MCF 10A (cell line): ENCODE measurements at regions of chr5 and their contacts with region 1.

Region 1: DNA sequence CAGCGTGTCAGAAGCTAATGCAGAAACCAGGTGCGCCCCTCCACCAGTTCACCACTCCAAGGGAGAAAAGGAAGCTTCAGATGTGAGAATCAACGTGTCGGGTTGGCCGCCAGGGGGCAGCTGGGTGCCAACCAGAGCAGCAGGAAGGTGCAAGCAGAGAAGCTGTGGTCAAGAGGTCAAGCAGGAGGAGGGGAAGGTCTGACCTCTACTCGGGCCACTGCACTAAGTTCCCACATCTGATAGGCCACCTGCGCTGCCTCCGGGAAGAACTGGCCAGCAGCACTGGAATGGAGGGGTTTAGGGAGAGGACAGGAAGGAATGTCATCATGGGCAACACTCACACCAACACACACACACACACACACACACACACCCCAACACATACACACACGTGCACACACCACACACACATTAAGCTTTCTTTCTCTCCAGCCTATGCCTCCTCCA is 31.4 kb downstream of the ANXA6 start:
- DNase-seq: peak; percentile 76
- H3K4me3 Mint-ChIP-seq: no peak overlapping the region
- H3K27ac Mint-ChIP-seq: no peak overlapping the region
- H3K4me1 Mint-ChIP-seq: peaks cover 12% of the 10 kb centered on the region
- H3K27me3 Mint-ChIP-seq: peaks cover 21% of the 10 kb centered on the region
- CTCF ChIP-seq: peak; percentile 91

Region 2: DNA sequence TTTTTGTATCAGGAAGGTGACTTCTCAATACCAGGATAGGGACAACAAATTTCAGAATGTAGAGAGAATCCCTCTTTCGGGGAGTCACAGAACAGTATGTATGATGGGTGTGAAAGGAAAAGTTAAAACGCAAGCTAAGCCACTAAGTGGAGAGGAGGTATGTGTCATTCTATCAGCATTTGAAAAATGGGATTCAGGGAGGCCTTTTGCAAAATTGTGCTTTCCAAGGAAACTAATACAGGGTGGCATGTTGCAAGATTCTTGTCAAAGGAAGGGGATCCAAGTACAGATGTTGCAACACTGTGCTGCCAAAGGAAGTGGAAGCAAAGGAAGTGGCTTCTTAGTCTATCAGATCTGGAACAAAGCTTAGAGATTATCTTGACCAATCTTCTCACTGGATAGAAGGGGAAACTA is 32.7 kb before region 1 on chr5:
- CTCF ChIA-PET with region 1: interaction called, 13 read pairs
- POLR2A ChIA-PET with region 1: no interaction called
- intact Hi-C with region 1: no loop called
- DNase-seq: peak; percentile 98
- H3K4me3 Mint-ChIP-seq: peak overlapping the region; percentile 28
- H3K27ac Mint-ChIP-seq: peak overlapping the region; percentile 76
- H3K4me1 Mint-ChIP-seq: peaks cover 43% of the 10 kb centered on the region
- H3K27me3 Mint-ChIP-seq: no peaks in the 10 kb centered on the region
- CTCF ChIP-seq: no peak

Region 3: GRCh38 chr5:151150471-151151262 is 24.4 kb after region 1 on chr5:
- CTCF ChIA-PET with region 1: interaction called, 206 read pairs
- POLR2A ChIA-PET with region 1: interaction called, 3 read pairs
- intact Hi-C with region 1: no loop called
- DNase-seq: no peak
- H3K4me3 Mint-ChIP-seq: no peak overlapping the region
- H3K27ac Mint-ChIP-seq: no peak overlapping the region
- H3K4me1 Mint-ChIP-seq: peaks cover 4% of the 10 kb centered on the region
- H3K27me3 Mint-ChIP-seq: no peaks in the 10 kb centered on the region
- CTCF ChIP-seq: no peak

Region 4: DNA sequence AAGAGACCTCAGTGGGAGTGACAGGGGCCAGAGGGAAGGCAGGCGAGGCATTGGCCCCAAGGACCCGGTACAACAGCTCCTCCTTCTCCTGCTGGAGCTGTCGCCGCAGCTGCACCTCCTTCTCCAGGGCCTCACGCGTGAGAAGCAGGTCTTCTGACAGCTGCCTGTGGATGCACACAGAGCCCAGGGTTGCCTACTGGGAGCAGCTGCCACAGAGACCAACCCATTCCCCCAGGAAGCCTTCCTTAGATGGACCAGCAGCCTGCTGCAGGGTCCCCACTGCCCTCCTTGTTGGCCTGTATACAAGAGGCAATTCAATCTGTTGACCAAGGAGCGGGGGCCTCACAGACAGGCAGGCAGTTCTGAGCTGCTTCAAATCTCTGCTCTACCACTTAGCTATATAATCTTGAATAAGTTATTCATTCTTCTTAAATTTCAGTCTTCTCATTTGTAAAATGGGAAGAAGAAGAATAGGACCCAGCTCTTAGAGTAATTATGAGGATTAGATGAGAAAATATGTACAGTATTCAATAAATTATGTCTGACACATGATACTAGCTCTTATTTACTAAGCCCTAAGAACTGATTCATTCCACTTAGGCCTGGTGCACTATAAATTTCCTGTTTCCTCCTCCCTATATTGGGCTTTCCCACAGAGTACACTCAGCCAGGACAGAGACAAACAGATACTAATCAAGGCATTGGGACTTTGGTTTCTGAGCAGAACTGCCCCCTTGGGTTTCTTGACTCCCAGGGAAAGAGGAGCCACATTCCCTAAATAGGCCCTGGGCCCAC is 57.4 kb after region 1 on chr5:
- CTCF ChIA-PET with region 1: interaction called, 11 read pairs
- POLR2A ChIA-PET with region 1: no interaction called
- intact Hi-C with region 1: no loop called
- DNase-seq: no peak
- H3K4me3 Mint-ChIP-seq: no peak overlapping the region
- H3K27ac Mint-ChIP-seq: no peak overlapping the region
- H3K4me1 Mint-ChIP-seq: no peaks in the 10 kb centered on the region
- H3K27me3 Mint-ChIP-seq: no peaks in the 10 kb centered on the region
- CTCF ChIP-seq: no peak

Region 5: DNA sequence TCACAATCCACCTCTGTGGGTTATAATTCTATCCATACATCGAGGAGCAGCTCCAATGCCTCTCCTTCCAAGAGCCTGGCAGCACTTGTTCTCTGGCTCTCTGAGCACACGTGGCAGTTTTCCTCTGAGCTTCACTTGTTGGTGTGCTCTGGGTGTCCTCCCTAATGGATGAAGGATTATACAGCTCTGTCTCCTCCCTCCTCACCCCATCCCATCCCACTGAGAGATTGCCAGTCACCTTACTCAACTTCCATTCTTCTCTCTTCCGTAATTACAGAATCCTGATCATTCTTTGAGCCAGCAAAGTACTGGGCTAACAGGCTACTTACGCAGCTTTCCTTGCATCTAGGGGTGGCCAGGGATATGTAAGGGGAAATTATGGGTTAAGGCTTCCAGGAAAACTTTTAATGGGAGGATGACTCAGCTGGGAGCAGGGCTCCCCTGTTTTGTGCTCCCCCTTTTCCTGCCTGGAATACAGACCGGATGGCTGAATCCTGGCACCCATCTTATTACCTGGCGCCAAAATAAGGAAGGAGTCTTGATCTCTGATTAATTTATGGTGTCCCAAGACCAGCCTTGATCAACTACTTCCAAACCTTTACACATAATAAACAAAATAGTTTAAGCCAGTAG is 103.9 kb after region 1 on chr5:
- CTCF ChIA-PET with region 1: interaction called, 338 read pairs
- POLR2A ChIA-PET with region 1: no interaction called
- intact Hi-C with region 1: no loop called
- DNase-seq: no peak
- H3K4me3 Mint-ChIP-seq: no peak overlapping the region
- H3K27ac Mint-ChIP-seq: no peak overlapping the region
- H3K4me1 Mint-ChIP-seq: peaks cover 9% of the 10 kb centered on the region
- H3K27me3 Mint-ChIP-seq: no peaks in the 10 kb centered on the region
- CTCF ChIP-seq: no peak

Region 6: GRCh38 chr5:151315998-151316597 is 189.9 kb after region 1 on chr5:
- CTCF ChIA-PET with region 1: interaction called, 55 read pairs
- POLR2A ChIA-PET with region 1: no interaction called
- intact Hi-C with region 1: loop called (anchors 1 kb)
- DNase-seq: peak; percentile 88
- H3K4me3 Mint-ChIP-seq: no peak overlapping the region
- H3K27ac Mint-ChIP-seq: no peak overlapping the region
- H3K4me1 Mint-ChIP-seq: no peaks in the 10 kb centered on the region
- H3K27me3 Mint-ChIP-seq: peaks cover 13% of the 10 kb centered on the region
- CTCF ChIP-seq: peak; percentile 97

Region 7: DNA sequence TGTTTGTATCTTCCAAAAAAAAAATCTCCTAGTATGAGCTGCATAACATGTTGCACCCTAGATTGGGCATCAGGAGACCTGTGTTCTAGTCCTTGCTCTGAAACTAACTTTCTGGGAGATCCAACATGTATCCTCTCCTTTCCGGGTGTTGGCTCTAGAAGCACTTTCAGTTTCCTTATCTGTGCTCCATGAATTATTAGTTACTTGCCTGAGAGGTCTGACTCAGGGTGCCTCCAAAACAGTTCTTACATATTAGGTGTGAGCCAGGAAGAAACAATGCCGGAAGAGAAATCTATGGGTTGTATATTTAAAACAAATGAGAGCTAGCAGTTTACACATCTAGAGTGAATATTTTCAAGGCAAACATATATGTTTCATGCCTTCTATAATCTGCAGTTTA is 257.9 kb after region 1 on chr5:
- CTCF ChIA-PET with region 1: no interaction called
- POLR2A ChIA-PET with region 1: no interaction called
- intact Hi-C with region 1: no loop called
- DNase-seq: peak; percentile 44
- H3K4me3 Mint-ChIP-seq: peak overlapping the region; percentile 9
- H3K27ac Mint-ChIP-seq: no peak overlapping the region
- H3K4me1 Mint-ChIP-seq: peaks cover 13% of the 10 kb centered on the region
- H3K27me3 Mint-ChIP-seq: peaks cover 14% of the 10 kb centered on the region
- CTCF ChIP-seq: no peak